Caco-2 (cell line): ENCODE measurements at regions of chr5 and their contacts with region 1.

Region 1: DNA sequence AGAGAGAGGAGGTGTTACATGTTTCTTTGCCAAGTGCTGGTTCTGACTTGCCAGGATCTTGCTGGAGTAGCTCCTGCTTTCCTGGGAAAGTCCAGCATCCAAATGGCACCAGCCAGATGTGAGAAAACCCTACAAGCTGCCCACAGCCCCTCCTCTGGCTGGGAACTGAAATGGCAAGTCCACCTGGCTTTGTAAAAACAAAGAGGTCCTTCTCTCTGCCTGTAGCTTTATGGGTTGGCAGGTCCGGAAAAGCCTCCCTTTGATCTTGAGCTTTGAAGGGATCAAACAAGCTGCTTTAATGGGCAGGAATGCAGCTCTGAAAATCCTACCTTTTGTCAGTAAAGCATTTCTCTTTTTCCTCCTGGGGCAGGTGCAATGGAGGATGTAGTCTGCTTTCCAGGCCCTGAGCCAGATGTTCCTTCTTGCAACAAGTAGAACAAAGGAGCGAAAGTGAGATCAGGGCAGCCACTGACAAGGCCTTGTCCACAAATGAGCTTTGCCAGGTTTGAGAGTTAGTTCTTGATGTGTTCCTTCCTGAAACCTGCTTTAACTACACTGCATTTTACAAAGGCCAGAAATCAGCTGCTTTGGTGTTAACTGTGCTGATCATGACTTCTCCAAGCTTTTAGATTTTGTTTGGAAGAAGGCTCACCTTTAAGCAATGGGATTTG is 456.7 kb downstream of the ZNF608 start:
- DNase-seq: peak; percentile 76 to 78
- H3K4me3 ChIP-seq: no peak overlapping the region
- H3K4me3 Mint-ChIP-seq: no peak overlapping the region
- H3K27ac Mint-ChIP-seq: peak overlapping the region; percentile 13
- H3K4me1 ChIP-seq: peaks cover 21% of the 10 kb centered on the region; the same call in 1 of the 2 replicates
- H3K4me1 Mint-ChIP-seq: peaks cover 18% of the 10 kb centered on the region
- H3K27me3 ChIP-seq: no peaks in the 10 kb centered on the region
- H3K27me3 Mint-ChIP-seq: no peaks in the 10 kb centered on the region
- CTCF ChIP-seq: peak; percentile 20 to 42

Region 2: DNA sequence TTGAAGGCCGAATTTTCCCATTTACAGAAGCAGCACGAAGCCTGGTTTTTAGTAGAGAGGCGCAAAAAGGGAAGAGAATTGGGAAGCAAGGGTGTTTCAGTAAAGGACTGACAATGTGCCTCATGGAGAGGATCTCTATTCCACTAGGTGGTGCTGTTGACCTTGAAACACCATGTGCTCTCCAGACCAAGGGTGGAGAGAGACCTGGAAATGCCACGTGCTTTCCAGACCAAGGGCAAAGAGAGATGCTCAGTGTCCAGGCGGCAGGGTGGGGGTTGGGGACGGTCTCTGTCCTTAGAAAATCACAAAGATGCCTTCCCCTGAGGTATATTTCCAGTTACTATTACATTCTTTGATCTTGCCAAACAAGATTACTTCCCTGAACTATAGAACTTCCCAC is 352.5 kb before region 1 on chr5:
- CTCF ChIA-PET with region 1: no interaction called
- POLR2A ChIA-PET with region 1: no interaction called
- intact Hi-C with region 1: loop called (anchors 5 kb)
- DNase-seq: peak; percentile 41 to 58
- H3K4me3 ChIP-seq: no peak overlapping the region
- H3K4me3 Mint-ChIP-seq: no peak overlapping the region
- H3K27ac Mint-ChIP-seq: peak overlapping the region; percentile 32
- H3K4me1 ChIP-seq: no peaks in the 10 kb centered on the region
- H3K4me1 Mint-ChIP-seq: peaks cover 5% of the 10 kb centered on the region
- H3K27me3 ChIP-seq: no peaks in the 10 kb centered on the region
- H3K27me3 Mint-ChIP-seq: no peaks in the 10 kb centered on the region
- CTCF ChIP-seq: peak in 1 of 2 experiments; percentile 10

Region 3: DNA sequence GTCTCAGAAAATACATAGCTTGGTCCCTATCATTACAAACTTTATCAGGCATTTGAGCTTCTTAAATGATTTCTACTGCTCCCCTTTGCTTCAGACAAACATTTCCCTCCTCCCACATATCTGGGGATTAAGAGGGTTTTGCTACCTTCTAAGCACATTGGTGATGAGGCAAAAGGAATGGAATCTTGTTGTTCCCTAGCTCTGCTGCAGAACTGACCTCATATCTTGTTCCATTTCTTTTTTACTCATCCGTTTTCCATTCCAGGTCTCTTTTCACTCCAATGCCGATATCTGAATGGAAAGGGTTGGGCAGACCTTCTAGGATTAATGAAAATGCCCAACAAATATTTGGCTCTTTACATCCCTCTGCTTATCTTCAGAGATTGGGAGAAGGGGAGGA is 12.1 kb after region 1 on chr5:
- CTCF ChIA-PET with region 1: interaction called, 3 read pairs
- POLR2A ChIA-PET with region 1: no interaction called
- intact Hi-C with region 1: loop called (anchors 1 kb)
- DNase-seq: peak in 1 of 2 experiments; percentile 38
- H3K4me3 ChIP-seq: no peak overlapping the region
- H3K4me3 Mint-ChIP-seq: peak overlapping the region; percentile 20
- H3K27ac Mint-ChIP-seq: peak overlapping the region; percentile 79
- H3K4me1 ChIP-seq: peaks cover 21% of the 10 kb centered on the region
- H3K4me1 Mint-ChIP-seq: peaks cover 19% of the 10 kb centered on the region
- H3K27me3 ChIP-seq: no peaks in the 10 kb centered on the region
- H3K27me3 Mint-ChIP-seq: no peaks in the 10 kb centered on the region
- CTCF ChIP-seq: no peak

Region 4: DNA sequence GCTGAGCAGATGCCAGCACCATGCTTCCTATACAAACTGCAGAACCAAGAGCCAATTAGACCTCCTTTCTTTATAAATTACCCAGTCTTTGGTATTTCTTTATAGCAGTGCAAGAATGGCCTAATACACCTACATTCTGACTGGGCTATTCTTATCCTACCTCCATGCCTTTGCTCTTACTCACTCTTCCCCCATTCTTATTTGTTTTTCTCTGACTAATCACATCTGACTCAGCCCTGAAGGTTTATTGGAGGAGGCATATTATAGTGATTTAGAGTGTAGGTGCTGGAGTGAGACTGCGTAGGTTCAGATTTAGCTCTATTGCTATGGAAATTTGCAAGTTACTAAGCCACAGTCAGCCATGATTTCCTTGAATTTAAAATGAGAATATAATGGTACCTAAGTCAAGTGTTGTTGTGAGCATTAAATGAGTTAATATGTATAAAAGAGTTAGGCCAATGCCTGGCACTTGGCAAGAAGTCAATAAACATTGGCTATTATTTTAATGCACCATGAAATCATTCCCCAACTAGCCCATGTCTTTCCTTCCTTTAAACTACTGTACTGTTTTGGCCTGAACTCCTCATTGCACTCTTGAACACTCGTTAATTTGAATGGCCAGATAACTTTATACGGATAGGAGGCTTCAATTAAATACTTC is 987.8 kb after region 1 on chr5:
- CTCF ChIA-PET with region 1: no interaction called
- POLR2A ChIA-PET with region 1: no interaction called
- intact Hi-C with region 1: no loop called
- DNase-seq: peak in 1 of 2 experiments; percentile 15
- H3K4me3 ChIP-seq: no peak overlapping the region
- H3K4me3 Mint-ChIP-seq: no peak overlapping the region
- H3K27ac Mint-ChIP-seq: no peak overlapping the region
- H3K4me1 ChIP-seq: peaks cover 14% of the 10 kb centered on the region
- H3K4me1 Mint-ChIP-seq: peaks cover 18% of the 10 kb centered on the region
- H3K27me3 ChIP-seq: no peaks in the 10 kb centered on the region
- H3K27me3 Mint-ChIP-seq: no peaks in the 10 kb centered on the region
- CTCF ChIP-seq: no peak